ENCODE measurements at regions of chr6 and their contacts with region 1.

Region 1: DNA sequence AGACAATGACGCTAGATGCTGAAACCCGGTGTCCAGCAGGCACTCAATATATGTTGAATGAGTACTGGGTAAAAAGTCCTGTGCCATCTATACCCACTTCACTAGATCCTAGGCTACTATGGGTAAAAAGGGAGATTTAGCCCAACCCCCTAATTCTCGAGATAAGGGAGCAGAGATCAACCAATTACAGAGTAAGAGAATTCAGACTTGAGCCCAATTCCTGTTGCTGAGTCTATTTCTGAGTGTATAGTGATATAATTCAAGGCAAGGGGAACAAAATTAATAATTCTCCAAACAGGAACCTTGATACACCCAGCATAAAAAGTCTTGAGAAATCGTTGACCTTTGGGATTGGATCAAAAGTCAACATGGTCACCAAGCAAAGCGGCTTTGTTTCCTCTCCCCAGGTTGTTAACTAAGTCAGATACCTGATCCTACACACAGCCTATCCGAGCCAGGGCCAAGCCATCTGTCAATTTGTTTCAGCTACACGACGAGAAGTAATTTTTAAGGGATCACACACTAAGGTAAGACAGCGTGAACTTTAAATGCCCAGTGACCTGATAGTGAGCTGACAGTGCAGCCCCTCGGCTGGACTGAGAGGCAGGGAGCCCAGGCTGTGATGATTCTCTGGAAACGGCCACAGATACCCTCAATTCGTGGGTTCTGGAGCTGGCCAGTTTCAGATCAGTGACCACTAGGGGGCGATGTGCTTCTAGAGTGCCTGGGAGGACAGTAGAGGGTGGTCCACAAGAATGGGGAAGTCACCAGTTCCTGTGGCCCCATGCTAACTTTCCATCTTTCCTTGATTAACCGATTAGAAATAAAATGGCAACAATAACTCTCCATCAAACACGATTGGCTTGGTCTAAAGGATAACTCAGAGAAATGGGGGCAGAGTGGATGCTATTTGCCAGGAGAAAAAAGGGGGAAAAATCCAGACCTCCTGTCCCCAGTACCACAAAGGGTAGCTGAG is 46.2 kb downstream of the SLC22A23 start:
- DNase-seq: peak; percentile 19
- H3K4me3 Mint-ChIP-seq: no peak overlapping the region
- H3K27ac Mint-ChIP-seq: no peak overlapping the region
- H3K4me1 Mint-ChIP-seq: peaks cover 9% of the 10 kb centered on the region
- H3K27me3 Mint-ChIP-seq: no peaks in the 10 kb centered on the region

Region 2: DNA sequence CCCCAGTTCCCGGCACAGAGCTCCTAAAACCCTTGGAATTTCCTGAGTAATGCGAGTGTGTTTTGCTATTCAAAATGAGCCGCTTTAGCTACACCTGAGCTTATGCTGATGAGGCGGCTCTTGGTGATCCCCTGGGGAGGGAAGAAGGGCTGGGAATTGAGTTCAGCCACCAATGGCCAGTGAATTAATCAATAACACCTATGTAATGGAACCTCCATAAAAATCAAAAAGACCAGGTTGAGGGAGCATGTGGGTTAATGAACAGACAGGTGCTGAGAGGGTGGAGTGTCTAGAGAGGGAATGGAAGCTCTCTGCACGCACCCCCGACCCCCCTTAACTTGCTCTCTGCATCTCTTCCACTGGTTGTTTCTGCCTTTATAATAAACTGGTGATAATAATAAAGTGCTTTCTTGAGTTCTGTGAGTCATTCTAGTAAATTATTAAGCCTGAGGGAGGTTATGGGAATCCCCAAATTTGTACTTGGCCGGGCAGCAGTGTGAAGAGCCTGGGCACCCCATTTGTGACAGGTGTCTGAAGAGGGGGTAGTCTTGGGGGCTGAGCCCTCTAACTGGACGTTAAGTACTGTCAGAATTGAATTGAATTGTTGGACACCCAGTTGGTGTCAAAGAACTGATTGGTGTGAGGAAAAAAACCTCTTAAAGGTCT is 544.4 kb before region 1 on chr6:
- intact Hi-C with region 1: no loop called
- DNase-seq: no peak
- H3K4me3 Mint-ChIP-seq: no peak overlapping the region
- H3K27ac Mint-ChIP-seq: peak overlapping the region; percentile 9
- H3K4me1 Mint-ChIP-seq: peaks cover 58% of the 10 kb centered on the region
- H3K27me3 Mint-ChIP-seq: no peaks in the 10 kb centered on the region

Region 3: DNA sequence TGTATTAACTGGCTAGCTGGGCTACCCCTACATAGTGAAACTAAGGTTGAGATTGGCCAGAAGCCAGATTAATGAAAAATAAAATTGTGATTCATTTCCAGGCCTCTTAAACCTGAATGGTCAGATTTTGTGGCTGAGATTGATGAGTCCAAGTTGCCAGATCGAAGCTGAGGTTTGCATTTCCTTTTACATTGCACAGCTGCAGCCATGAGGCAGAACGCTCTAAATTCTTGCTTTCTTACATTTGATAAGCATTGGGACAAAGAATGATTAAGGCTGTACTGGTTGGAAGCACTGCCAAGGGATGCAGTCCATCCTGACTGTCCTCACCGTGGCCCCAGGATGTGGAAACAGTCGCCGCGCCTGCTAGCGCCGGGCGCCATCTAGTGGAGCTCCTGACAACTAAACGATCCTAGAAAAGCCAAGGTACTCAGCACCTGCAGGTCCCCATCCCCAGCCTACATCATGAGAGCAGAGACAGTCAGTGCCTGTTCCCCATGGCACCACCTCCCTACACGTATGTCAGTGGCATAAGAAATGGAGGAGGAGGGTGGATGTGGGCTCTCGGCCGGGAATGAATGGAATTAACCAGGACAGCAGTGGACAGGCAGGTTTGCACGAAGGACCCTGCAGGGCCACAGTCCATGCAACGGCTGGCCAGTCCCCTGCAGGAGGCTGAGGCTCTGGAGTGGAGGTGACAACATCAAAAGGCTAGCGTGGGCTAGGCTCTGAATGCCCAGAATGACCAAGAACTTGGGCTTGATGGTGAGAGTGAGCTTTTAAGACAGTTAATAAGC is 321.9 kb after region 1 on chr6:
- intact Hi-C with region 1: loop called (anchors 1 kb)
- DNase-seq: peak; percentile 38
- H3K4me3 Mint-ChIP-seq: no peak overlapping the region
- H3K27ac Mint-ChIP-seq: no peak overlapping the region
- H3K4me1 Mint-ChIP-seq: peaks cover 5% of the 10 kb centered on the region
- H3K27me3 Mint-ChIP-seq: peaks cover 14% of the 10 kb centered on the region

Measured in activated T-helper 1 cell treated with anti-CD3 and anti-CD28 coated beads, Interleukin-12 subunit alpha, Interleukin-12 subunit beta, Interleukin-2, Interleukin-4 antibody, amounts not matched to agents 30 ng/mL and 10 ng/mL and 1 ng/mL, durations not matched to agents 14 hours and 24 hours and 36 hours (primary cell).